Common myeloid progenitor, CD34-positive (primary cell): ENCODE measurements at regions of chr5 and their contacts with region 1.

Region 1: DNA sequence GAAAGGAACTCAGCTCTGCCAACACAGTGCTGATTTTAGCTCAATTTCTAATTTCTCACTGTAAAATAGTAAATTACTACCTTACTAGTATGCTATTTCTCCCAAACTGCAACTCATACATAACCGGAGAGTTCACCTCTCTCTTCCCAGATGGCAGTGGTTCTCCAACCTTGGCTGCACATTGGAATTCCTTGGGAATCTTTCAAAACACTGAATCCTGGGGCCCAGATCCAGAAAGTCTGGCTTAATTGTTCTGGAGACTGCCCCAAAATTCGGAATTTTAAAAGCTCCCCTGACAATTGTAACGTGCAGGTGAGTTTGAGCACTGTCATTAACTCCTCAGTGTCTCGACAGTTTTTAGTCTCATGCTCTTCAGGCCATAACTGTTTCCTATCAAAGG is 100.3 kb downstream of the SLC1A3 start:
- DNase-seq: no peak
- H3K4me3 ChIP-seq: no peak overlapping the region
- H3K27ac ChIP-seq: no peak overlapping the region
- H3K4me1 ChIP-seq: peaks cover 0 to 3% (median 0%) of the 10 kb centered on the region in 4 experiments
- H3K27me3 ChIP-seq: no peaks in the 10 kb centered on the region

Region 2: GRCh38 chr5:36695677-36696673 is 10.7 kb before region 1 on chr5:
- CTCF ChIA-PET with region 1: interaction called, 11 read pairs
- POLR2A ChIA-PET with region 1: no interaction called
- DNase-seq: peak; percentile 75 to 85 (median 79)
- H3K4me3 ChIP-seq: no peak overlapping the region
- H3K27ac ChIP-seq: no peak overlapping the region
- H3K4me1 ChIP-seq: peaks cover 0 to 18% (median 14%) of the 10 kb centered on the region in 4 experiments
- H3K27me3 ChIP-seq: no peaks in the 10 kb centered on the region